Posterior cingulate gyrus (tissue), 11 donors: ENCODE measurements at regions of chr1 and their contacts with region 1.

Region 1: GRCh38 chr1:29202584-29203340 is 21.1 kb upstream of the SRSF4 start:
- DNase-seq: peak; percentile 78 to 99 (median 96)

Region 2: GRCh38 chr1:27563591-27564471 is 1638.9 kb before region 1 on chr1:
- intact Hi-C with region 1: no loop called
- DNase-seq: peak in 2 of 10 donors; percentile 84 to 92

Region 3: DNA sequence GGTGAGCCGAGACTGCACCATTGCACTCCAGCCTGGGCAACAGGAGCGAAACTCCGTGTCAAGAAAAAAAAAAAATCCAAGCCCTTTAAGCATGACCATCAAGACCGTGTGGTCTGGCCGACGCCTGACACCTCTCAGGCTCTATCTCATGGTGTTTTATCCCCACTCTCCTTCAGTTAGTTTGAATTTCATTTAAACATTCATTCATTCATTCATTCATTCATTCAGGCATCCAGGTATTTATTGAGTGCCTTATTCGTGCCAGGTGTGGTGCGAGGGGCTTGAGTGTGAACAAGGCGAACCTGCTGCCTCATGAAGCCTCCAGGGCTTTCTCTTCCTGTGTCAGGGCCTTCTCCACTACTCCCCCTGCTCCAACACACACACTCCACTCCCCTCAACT is 413.4 kb before region 1 on chr1:
- intact Hi-C with region 1: loop called (anchors 5 kb)
- DNase-seq: peak in 2 of 10 donors; percentile 10 to 17

Region 4: GRCh38 chr1:29181413-29182225 is 21.1 kb before region 1 on chr1 and contains the start of gene SRSF4:
- intact Hi-C with region 1: loop called (anchors 2 kb)
- DNase-seq: peak; percentile 94 to 100 (median 98)

Region 5: GRCh38 chr1:29354511-29355098 is 151.8 kb after region 1 on chr1:
- intact Hi-C with region 1: no loop called
- DNase-seq: peak in 3 of 10 donors; percentile 56 to 79 (median 66)